Ascending aorta (tissue), 2 donors: ENCODE measurements at regions of chr14 and their contacts with region 1.

Region 1: DNA sequence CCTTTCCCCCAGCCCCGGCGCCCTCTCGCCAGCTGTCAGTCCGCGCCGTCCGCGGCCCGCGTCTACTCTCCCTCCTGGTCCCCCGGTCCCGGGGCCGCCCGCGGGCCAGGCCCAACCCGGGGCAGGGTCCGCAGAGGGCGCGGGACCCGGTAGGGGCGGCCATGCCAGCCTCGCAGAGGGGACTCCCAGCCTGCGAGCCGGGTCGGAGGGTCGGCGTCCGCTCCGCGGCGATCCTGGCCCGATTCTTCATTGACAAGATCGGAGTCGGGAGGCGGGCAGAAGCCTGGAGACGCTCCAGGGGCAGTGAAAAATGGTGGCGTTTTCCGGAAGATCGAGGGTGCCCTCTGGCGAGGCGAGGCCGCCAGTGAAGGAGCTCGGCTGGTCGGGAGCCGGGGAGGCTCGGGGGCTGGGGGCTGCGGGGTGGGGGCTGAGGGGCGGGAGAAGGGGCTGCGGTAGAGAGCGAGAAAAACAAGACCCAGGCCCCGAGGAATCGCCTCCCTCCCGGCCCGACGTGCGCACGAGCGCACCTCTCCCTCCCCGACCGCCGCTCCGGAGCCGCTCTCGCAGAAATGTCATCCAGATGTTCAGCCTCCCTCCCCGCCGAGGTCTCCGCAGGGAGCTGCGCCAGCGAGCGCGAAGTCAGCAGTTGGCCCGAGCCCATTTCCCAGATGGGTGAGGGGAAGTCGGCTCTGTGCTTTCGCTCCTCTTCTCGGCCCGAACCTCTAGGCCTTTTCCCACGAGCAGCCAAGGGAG is 647 bp upstream of the TGFB3 start:
- DNase-seq: peak in 1 of 2 donors; percentile 92
- H3K4me3 ChIP-seq: peak overlapping the region; percentile 81 to 88
- H3K27ac ChIP-seq: peak overlapping the region; percentile 99 to 100
- H3K4me1 ChIP-seq: peaks cover 15 to 40% of the 10 kb centered on the region in 2 donors
- H3K27me3 ChIP-seq: no peaks in the 10 kb centered on the region
- CTCF ChIP-seq: peak; percentile 54 to 86 (median 83)

Region 2: GRCh38 chr14:74595006-74595735 is 1387.3 kb before region 1 on chr14:
- intact Hi-C with region 1: loop called (anchors 10 kb)
- DNase-seq: peak in 1 of 2 donors; percentile 84
- H3K4me3 ChIP-seq: peak overlapping the region in 1 of 2 donors; percentile 16
- H3K27ac ChIP-seq: peak overlapping the region; percentile 91 to 94
- H3K4me1 ChIP-seq: peaks cover 50 to 80% of the 10 kb centered on the region in 2 donors
- H3K27me3 ChIP-seq: no peaks in the 10 kb centered on the region
- CTCF ChIP-seq: no peak

Region 3: GRCh38 chr14:75660630-75661494 is 321.6 kb before region 1 on chr14 and contains the starts of genes ERG28 and TTLL5:
- intact Hi-C with region 1: loop called (anchors 2 kb)
- DNase-seq: peak; percentile 94 to 98
- H3K4me3 ChIP-seq: peak within 1 kb of the TSS; percentile 74 to 100
- H3K27ac ChIP-seq: peak within 1 kb of the TSS; percentile 78 to 87
- H3K4me1 ChIP-seq: peaks cover 4 to 6% of the 10 kb centered on the region in 2 donors
- H3K27me3 ChIP-seq: no peaks in the 10 kb centered on the region
- CTCF ChIP-seq: no peak
- total RNA-seq, gene ERG28: 2.3 TPM
- total RNA-seq, gene TTLL5: 43.1 TPM

Region 4: DNA sequence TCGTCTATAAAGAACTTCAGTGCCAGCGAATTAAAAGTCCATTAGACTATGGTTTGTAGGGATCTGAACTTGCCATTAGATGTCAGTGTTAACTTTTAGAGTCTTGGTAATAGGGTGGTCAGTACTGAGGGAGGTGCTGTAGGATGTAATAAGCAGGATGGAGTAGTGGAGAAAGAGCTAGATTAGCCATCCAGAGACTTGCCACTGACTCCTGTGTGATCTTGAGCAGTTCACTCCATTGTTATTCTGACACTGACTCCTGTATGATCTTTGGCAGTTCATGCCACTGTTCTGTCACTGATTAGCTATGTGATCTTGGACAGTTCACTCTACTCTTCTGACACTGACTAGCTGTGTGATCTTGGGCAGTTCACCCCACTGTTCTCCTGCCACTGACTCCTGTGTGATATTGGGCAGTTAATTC is 187.8 kb before region 1 on chr14:
- intact Hi-C with region 1: loop called (anchors 1 kb)
- DNase-seq: no peak
- H3K4me3 ChIP-seq: no peak overlapping the region
- H3K27ac ChIP-seq: no peak overlapping the region
- H3K4me1 ChIP-seq: no peaks in the 10 kb centered on the region
- H3K27me3 ChIP-seq: no peaks in the 10 kb centered on the region
- CTCF ChIP-seq: peak in 2 of 3 experiments; percentile 22 to 61

Region 5: GRCh38 chr14:75906676-75907280 is 75.7 kb before region 1 on chr14:
- intact Hi-C with region 1: loop called (anchors 1 kb)
- DNase-seq: peak in 1 of 2 donors; percentile 79
- H3K4me3 ChIP-seq: peak overlapping the region in 1 of 2 donors; percentile 6
- H3K27ac ChIP-seq: peak overlapping the region; percentile 42 to 51
- H3K4me1 ChIP-seq: peaks cover 0 to 5% of the 10 kb centered on the region in 2 donors
- H3K27me3 ChIP-seq: no peaks in the 10 kb centered on the region
- CTCF ChIP-seq: peak; percentile 69 to 87 (median 85)

Region 6: GRCh38 chr14:76109087-76109880 is 126.8 kb after region 1 on chr14:
- intact Hi-C with region 1: no loop called
- DNase-seq: no peak
- H3K4me3 ChIP-seq: no peak overlapping the region
- H3K27ac ChIP-seq: no peak overlapping the region
- H3K4me1 ChIP-seq: no peaks in the 10 kb centered on the region
- H3K27me3 ChIP-seq: no peaks in the 10 kb centered on the region
- CTCF ChIP-seq: no peak

Region 7: DNA sequence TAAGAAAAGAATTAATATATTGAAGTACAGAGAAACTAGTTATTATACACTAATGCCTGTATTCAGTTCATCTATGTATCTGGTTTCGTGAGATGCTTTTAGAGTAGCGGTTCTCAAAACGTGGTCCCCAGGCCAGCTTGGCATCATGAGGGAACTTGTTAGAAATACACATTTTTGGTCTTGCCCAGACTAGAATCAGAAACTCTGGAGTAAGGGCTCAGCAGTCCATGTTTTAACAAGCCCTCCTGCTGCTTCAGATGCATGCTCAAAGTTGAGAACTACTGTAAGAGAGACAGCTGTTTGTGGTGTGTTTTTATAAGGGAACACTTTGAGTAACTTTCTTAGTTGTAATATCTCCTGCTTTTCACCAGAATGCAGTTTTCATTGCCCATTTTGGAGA is 187.3 kb after region 1 on chr14:
- intact Hi-C with region 1: no loop called
- DNase-seq: no peak
- H3K4me3 ChIP-seq: no peak overlapping the region
- H3K27ac ChIP-seq: no peak overlapping the region
- H3K4me1 ChIP-seq: no peaks in the 10 kb centered on the region
- H3K27me3 ChIP-seq: no peaks in the 10 kb centered on the region
- CTCF ChIP-seq: no peak

Region 8: GRCh38 chr14:77040059-77040740 is 1057.8 kb after region 1 on chr14:
- intact Hi-C with region 1: loop called (anchors 10 kb)
- DNase-seq: peak; percentile 90 to 98
- H3K4me3 ChIP-seq: peak overlapping the region; percentile 1 to 59
- H3K27ac ChIP-seq: peak overlapping the region; percentile 78 to 88
- H3K4me1 ChIP-seq: peaks cover 26 to 71% of the 10 kb centered on the region in 2 donors
- H3K27me3 ChIP-seq: no peaks in the 10 kb centered on the region
- CTCF ChIP-seq: no peak